Breast epithelium (tissue), 4 donors: ENCODE measurements at regions of chr15 and their contacts with region 1.

Region 1: DNA sequence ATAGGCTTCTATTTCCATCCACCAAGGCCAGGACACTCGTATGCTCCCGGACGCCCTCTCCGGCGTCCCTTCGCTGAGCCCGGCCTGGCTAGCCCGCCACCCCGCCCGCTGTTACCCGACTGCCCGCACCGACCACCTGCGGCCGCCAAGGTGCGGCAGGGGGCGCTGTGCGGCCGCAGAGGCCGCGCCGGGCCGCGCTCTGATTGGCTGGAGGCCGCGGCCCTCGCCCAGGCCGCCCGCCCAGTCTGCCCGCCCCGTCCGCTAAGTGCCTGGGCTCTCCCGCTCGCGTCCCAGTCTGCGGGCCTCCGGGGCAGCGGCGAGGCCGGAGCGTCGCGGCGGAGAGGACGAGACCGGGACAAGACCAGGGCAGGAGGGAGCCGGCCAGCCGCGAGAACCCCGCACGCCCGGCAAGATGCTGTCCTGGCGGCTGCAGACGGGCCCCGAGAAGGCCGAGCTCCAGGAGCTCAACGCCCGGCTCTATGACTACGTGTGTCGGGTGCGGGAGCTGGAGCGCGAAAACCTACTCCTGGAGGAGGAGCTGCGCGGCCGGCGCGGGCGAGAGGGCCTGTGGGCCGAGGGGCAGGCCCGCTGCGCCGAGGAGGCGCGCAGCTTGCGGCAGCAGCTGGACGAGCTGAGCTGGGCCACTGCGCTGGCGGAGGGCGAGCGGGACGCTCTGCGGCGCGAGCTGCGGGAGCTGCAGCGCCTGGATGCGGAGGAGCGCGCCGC is at the start of gene SYNM:
- DNase-seq: peak; percentile 81 to 82
- H3K4me3 ChIP-seq: peak within 1 kb of the TSS; percentile 45 to 87 (median 70)
- H3K27ac ChIP-seq: peak within 1 kb of the TSS; percentile 77 to 94
- H3K4me1 ChIP-seq: peaks cover 0 to 4% of the 10 kb centered on the region in 2 donors
- H3K27me3 ChIP-seq: peaks cover 0 to 6% of the 10 kb centered on the region in 2 donors
- CTCF ChIP-seq: peak; percentile 29 to 86 (median 61)
- POLR2A ChIP-seq: peak; percentile 43
- total RNA-seq, gene SYNM: 32.0 to 319 (median 115) TPM

Region 2: GRCh38 chr15:99213187-99213811 is 108.3 kb after region 1 on chr15:
- intact Hi-C with region 1: loop called (anchors 5 kb)
- DNase-seq: peak; percentile 82 to 83
- H3K4me3 ChIP-seq: no peak overlapping the region
- H3K27ac ChIP-seq: no peak overlapping the region
- H3K4me1 ChIP-seq: no peaks in the 10 kb centered on the region
- H3K27me3 ChIP-seq: no peaks in the 10 kb centered on the region
- CTCF ChIP-seq: peak; percentile 50 to 87 (median 86)
- POLR2A ChIP-seq: no peak